Tibial artery (tissue), 4 donors: ENCODE measurements at regions of chr20 and their contacts with region 1.

Region 1: GRCh38 chr20:32207626-32208498 is at the starts of genes PLAGL2 and POFUT1:
- DNase-seq: peak; percentile 84 to 94
- H3K4me3 ChIP-seq: peak within 1 kb of the TSS; percentile 65 to 100
- H3K27ac ChIP-seq: peak within 1 kb of the TSS; percentile 78 to 96
- H3K4me1 ChIP-seq: peaks cover 0 to 62% (median 45%) of the 10 kb centered on the region in 4 donors
- H3K27me3 ChIP-seq: no peaks in the 10 kb centered on the region
- CTCF ChIP-seq: no peak

Region 2: GRCh38 chr20:32109392-32110172 is 98.3 kb before region 1 on chr20 and contains the start of gene TM9SF4:
- intact Hi-C with region 1: loop called (anchors 5 kb)
- DNase-seq: peak; percentile 90 to 93
- H3K4me3 ChIP-seq: peak within 1 kb of the TSS; percentile 82 to 99
- H3K27ac ChIP-seq: peak within 1 kb of the TSS; percentile 95 to 100
- H3K4me1 ChIP-seq: peaks cover 0 to 31% (median 16%) of the 10 kb centered on the region in 4 donors
- H3K27me3 ChIP-seq: no peaks in the 10 kb centered on the region
- CTCF ChIP-seq: no peak

Region 3: GRCh38 chr20:32240220-32240619 is 32.4 kb after region 1 on chr20:
- intact Hi-C with region 1: no loop called
- DNase-seq: no peak
- H3K4me3 ChIP-seq: no peak overlapping the region
- H3K27ac ChIP-seq: no peak overlapping the region
- H3K4me1 ChIP-seq: no peaks in the 10 kb centered on the region
- H3K27me3 ChIP-seq: peaks cover 0 to 3% of the 10 kb centered on the region in 2 donors
- CTCF ChIP-seq: no peak

Region 4: GRCh38 chr20:32456869-32457478 is 249.1 kb after region 1 on chr20:
- intact Hi-C with region 1: loop called (anchors 10 kb)
- DNase-seq: no peak
- H3K4me3 ChIP-seq: peak overlapping the region; percentile 49 to 54
- H3K27ac ChIP-seq: no peak overlapping the region
- H3K4me1 ChIP-seq: peaks cover 7 to 20% (median 14%) of the 10 kb centered on the region in 4 donors
- H3K27me3 ChIP-seq: no peaks in the 10 kb centered on the region
- CTCF ChIP-seq: peak; percentile 62 to 75

Region 5: GRCh38 chr20:32470025-32470861 is 262.4 kb after region 1 on chr20:
- intact Hi-C with region 1: loop called (anchors 10 kb)
- DNase-seq: peak in 1 of 2 donors; percentile 48
- H3K4me3 ChIP-seq: no peak overlapping the region
- H3K27ac ChIP-seq: no peak overlapping the region
- H3K4me1 ChIP-seq: peaks cover 0 to 45% (median 13%) of the 10 kb centered on the region in 4 donors
- H3K27me3 ChIP-seq: no peaks in the 10 kb centered on the region
- CTCF ChIP-seq: peak; percentile 11 to 13